A549 (cell line): ENCODE measurements at regions of chr2 and their contacts with region 1.

Region 1: DNA sequence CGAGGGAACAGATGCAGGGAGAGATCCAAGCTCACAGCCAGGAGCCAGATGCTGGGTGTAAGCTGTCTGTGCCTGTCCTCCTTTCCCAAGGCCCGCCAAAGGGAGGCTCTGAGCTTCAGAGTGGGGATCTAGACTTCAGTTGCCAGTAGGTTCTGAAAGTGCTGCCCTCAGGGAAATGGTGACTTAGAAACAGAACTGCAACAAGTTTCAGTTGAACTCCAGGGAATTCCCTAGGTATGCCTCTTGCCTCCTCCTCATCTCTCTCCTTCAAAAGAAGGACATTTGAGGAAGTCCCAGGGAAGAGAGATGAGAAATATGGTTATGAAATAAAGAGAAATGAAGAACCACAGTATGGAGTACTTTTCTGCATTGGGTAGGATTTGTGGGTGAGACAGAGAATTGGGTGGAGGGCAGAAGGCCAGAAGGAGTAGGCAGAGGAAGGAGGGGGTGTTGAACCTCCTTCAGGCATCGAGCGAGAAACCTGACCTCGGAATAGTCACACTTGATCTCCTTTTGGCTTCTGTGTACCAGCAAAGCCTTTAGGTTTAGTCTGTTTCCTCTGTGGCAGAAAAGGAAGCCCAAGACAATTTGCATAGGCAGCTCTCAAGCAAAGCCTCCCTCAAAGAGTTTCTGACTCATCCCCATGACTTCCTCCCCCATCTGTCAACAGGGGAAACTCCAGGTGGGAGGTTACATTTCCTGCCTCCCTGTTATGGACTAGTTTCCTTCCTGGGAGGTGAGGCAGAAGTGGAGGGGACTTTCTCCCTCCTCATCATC is 45.7 kb downstream of the QPCT start:
- DNase-seq: peak; percentile 79 to 86
- ATAC-seq: peak; percentile 86 to 91
- H3K4me3 ChIP-seq: no peak overlapping the region
- H3K27ac ChIP-seq: peak overlapping the region; percentile 35 to 80
- H3K4me1 ChIP-seq: peaks cover 22% of the 10 kb centered on the region
- CTCF ChIP-seq: no peak
- EP300 ChIP-seq: no peak
- POLR2A ChIP-seq: no peak
- RAD21 ChIP-seq: no peak

Region 2: DNA sequence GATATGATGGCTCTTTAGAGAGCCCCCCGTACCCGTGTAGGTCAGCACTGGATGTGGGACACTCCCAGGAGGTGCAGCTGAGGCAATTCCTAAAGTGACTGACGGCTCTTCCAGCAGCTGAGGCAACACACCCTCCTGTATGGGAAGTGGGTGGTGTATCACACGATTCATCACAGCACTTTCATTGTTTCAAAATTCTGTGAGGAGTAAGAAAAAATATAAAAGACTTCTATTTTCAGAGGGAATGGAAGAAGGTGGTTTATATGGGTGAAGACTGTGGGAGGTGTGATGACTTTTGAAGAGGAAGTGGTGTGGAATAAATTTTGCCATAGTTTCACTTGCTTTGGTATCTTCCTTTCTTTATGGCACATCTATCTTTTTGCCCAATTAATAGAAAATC is 23.4 kb before region 1 on chr2:
- CTCF ChIA-PET with region 1: interaction called, 10 read pairs
- POLR2A ChIA-PET with region 1: no interaction called
- DNase-seq: no peak
- ATAC-seq: no peak
- H3K4me3 ChIP-seq: no peak overlapping the region
- H3K27ac ChIP-seq: no peak overlapping the region
- H3K4me1 ChIP-seq: no peaks in the 10 kb centered on the region
- CTCF ChIP-seq: no peak
- EP300 ChIP-seq: no peak
- POLR2A ChIP-seq: no peak
- RAD21 ChIP-seq: no peak

Region 3: DNA sequence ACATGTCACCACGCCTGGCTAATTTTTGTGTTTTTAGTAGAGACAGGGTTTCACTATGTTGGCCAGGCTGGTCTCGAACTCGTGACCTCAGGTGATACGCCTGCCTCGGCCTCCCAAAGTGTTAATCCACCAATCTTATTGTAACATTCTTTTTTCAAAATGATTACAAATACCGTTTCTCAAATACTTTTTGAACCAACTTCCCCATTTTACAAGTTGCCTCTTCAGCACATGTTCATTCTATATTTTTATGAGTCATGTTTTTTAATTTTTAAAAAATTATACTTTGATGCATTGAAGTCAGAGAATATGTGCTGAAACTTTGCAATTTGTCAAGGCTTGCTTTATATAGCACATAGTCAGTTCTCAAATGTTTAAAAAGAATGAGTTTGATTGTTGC is 12.5 kb after region 1 on chr2:
- CTCF ChIA-PET with region 1: interaction called, 169 read pairs
- POLR2A ChIA-PET with region 1: no interaction called
- DNase-seq: no peak
- ATAC-seq: no peak
- H3K4me3 ChIP-seq: no peak overlapping the region
- H3K27ac ChIP-seq: no peak overlapping the region
- H3K4me1 ChIP-seq: no peaks in the 10 kb centered on the region
- CTCF ChIP-seq: no peak
- EP300 ChIP-seq: no peak
- POLR2A ChIP-seq: no peak
- RAD21 ChIP-seq: no peak

Region 4: GRCh38 chr2:37427241-37427640 is 37.1 kb after region 1 on chr2:
- CTCF ChIA-PET with region 1: no interaction called
- POLR2A ChIA-PET with region 1: no interaction called
- DNase-seq: no peak
- ATAC-seq: no peak
- H3K4me3 ChIP-seq: no peak overlapping the region
- H3K27ac ChIP-seq: no peak overlapping the region
- H3K4me1 ChIP-seq: no peaks in the 10 kb centered on the region
- CTCF ChIP-seq: no peak
- EP300 ChIP-seq: no peak
- POLR2A ChIP-seq: no peak
- RAD21 ChIP-seq: no peak

Region 5: GRCh38 chr2:37870829-37871228 is 480.7 kb after region 1 on chr2:
- CTCF ChIA-PET with region 1: interaction called, 292 read pairs
- POLR2A ChIA-PET with region 1: no interaction called
- DNase-seq: no peak
- ATAC-seq: no peak
- H3K4me3 ChIP-seq: no peak overlapping the region
- H3K27ac ChIP-seq: no peak overlapping the region
- H3K4me1 ChIP-seq: 0 out of 3 replicates have a peak, but pooled peaks cover 4% of the 10 kb centered on the region
- CTCF ChIP-seq: no peak
- EP300 ChIP-seq: no peak
- POLR2A ChIP-seq: no peak
- RAD21 ChIP-seq: no peak

Region 6: GRCh38 chr2:37896314-37896713 is 506.1 kb after region 1 on chr2:
- CTCF ChIA-PET with region 1: interaction called, 68 read pairs
- POLR2A ChIA-PET with region 1: no interaction called
- DNase-seq: peak in 1 of 2 experiments; percentile 35
- ATAC-seq: peak in 1 of 2 experiments; percentile 53; a peak in 2 of 6 replicates
- H3K4me3 ChIP-seq: no peak overlapping the region
- H3K27ac ChIP-seq: no peak overlapping the region
- H3K4me1 ChIP-seq: peaks cover 12% of the 10 kb centered on the region; the same call in 2 of the 3 replicates
- CTCF ChIP-seq: peak; percentile 14; the same call in 1 of the 3 replicates
- EP300 ChIP-seq: no peak
- POLR2A ChIP-seq: no peak
- RAD21 ChIP-seq: peak in 1 of 2 experiments; percentile 29; a peak in 1 of 5 replicates

Region 7: GRCh38 chr2:38274286-38275276 is 884.4 kb after region 1 on chr2:
- CTCF ChIA-PET with region 1: interaction called, 12 read pairs
- POLR2A ChIA-PET with region 1: no interaction called
- DNase-seq: peak; percentile 76 to 87
- ATAC-seq: peak; percentile 86 to 90
- H3K4me3 ChIP-seq: no peak overlapping the region
- H3K27ac ChIP-seq: peak overlapping the region; percentile 29 to 42; a peak in 4 of 6 replicates
- H3K4me1 ChIP-seq: peaks cover 26% of the 10 kb centered on the region
- CTCF ChIP-seq: peak; percentile 95
- EP300 ChIP-seq: no peak
- POLR2A ChIP-seq: no peak
- RAD21 ChIP-seq: peak; percentile 96 to 98